ENCODE measurements at regions of chr19 and their contacts with region 1.

Region 1: DNA sequence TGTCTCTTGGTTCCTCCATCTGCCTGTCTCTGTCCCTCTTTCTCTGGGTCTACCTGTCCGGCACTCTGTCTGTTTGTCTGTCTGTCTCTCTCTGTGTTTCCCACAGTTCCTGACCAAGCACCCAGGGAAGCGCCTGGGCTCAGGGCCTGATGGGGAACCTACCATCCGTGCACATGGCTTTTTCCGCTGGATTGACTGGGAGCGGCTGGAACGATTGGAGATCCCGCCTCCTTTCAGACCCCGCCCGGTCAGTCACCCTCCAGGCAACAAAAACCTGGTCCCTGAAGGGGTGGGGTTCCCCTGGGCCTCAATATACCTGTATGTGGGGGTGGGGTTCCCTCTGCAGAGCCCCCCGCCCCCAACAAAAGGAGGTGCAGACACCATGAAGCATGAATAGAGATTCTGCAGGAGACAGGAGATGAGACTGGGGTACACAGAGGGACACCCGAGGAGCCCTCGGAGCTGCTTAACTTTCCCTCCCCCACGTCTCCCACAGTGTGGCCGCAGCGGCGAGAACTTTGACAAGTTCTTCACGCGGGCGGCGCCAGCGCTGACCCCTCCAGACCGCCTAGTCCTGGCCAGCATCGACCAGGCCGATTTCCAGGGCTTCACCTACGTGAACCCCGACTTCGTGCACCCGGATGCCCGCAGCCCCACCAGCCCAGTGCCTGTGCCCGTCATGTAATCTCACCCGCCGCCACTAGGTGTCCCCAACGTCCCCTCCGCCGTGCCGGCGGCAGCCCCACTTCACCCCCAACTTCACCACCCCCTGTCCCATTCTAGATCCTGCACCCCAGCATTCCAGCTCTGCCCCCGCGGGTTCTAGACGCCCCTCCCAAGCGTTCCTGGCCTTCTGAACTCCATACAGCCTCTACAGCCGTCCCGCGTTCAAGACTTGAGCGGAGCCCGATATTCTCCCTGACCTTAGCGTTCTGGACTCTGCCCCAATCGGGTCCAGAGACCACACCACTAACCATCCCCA is 2.6 kb upstream of the CACNG7 start:
- DNase-seq: peak; percentile 59
- H3K4me3 Mint-ChIP-seq: no peak overlapping the region
- H3K27ac Mint-ChIP-seq: no peak overlapping the region
- H3K4me1 Mint-ChIP-seq: peaks cover 9% of the 10 kb centered on the region
- H3K27me3 Mint-ChIP-seq: peaks cover 52% of the 10 kb centered on the region

Region 2: DNA sequence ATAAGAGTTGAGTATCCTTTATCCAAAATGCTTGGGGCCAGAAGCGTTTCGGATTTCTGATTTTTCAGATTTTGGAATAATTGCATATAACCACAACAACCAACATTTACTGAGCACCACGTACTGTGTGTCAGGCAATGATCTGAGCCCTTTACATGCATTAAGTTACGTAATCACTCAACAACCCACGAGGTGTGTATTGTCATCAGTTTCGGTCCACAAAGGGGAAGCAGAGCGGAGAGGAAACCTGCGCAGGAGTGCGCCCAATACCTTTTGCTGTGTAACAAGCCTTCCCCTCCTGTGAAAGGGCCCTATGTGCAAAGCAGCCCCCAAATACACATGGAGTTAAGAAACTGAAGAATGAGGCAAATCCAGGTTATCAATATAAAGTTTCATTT is 61.7 kb before region 1 on chr19:
- intact Hi-C with region 1: loop called (anchors 2 kb)
- DNase-seq: no peak
- H3K4me3 Mint-ChIP-seq: no peak overlapping the region
- H3K27ac Mint-ChIP-seq: no peak overlapping the region
- H3K4me1 Mint-ChIP-seq: peaks cover 5% of the 10 kb centered on the region
- H3K27me3 Mint-ChIP-seq: peaks cover 15% of the 10 kb centered on the region

Region 3: DNA sequence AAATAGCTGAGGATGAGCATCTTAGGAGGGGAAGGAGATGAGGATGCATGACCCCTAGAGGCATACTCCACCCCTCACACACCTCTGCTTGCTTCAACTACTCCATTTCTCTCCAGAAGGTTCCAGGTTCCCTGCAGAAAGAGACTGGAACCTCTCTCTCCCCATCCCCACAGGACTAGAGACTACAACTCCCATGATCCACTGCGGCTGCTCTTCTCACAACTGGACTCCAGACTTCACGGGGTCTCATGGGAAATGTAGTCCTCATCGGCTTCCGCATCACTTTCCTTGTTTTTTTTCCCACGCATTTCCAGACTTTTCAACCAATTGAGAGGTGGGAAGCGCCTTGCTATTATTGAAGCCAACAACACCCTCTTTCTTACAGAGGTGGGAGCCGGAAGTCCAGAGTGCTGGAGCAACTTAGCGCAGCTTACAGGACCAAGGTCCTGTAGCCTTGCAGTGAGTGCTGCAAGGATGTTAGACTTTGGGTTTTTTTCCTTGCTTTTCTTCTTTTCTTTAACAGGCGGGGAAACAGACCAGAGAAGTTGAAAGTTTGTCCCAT is 71.0 kb after region 1 on chr19:
- intact Hi-C with region 1: loop called (anchors 1 kb)
- DNase-seq: peak; percentile 36
- H3K4me3 Mint-ChIP-seq: peak overlapping the region; percentile 40
- H3K27ac Mint-ChIP-seq: no peak overlapping the region
- H3K4me1 Mint-ChIP-seq: peaks cover 11% of the 10 kb centered on the region
- H3K27me3 Mint-ChIP-seq: peaks cover 44% of the 10 kb centered on the region

Region 4: DNA sequence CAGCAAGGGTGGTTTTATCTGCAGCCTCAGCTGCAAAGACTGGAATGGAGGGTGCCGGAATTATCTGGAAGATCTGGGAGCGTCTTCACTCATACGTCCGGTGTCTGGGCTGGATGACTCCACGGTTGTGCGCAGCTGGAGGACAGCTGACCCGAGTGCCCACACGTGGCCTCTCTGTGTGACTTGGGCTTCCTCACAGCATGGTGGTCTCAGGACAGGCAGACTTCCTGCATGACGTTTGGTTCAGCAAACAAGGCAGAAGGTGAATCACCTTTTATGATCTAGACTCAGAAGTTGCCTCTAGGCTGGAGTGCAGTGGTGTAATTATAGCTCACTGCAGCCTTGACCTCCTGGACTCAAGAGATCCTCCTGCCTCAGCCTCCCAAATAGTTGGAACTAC is 118.2 kb after region 1 on chr19:
- intact Hi-C with region 1: loop called (anchors 2 kb)
- DNase-seq: no peak
- H3K4me3 Mint-ChIP-seq: no peak overlapping the region
- H3K27ac Mint-ChIP-seq: no peak overlapping the region
- H3K4me1 Mint-ChIP-seq: peaks cover 12% of the 10 kb centered on the region
- H3K27me3 Mint-ChIP-seq: peaks cover 4% of the 10 kb centered on the region

Measured in activated T-helper 2 cell treated with anti-CD3 and anti-CD28 coated beads, Interferon-gamma antibody, Interleukin-2, Interleukin-4, amounts not matched to agents 10 μg/mL and 5 μg/mL and 100 μg/mL, durations not matched to agents 14 hours and 24 hours and 36 hours (primary cell).